Stomach (tissue), 19 donors: ENCODE measurements at regions of chr14 and their contacts with region 1.

Region 1: DNA sequence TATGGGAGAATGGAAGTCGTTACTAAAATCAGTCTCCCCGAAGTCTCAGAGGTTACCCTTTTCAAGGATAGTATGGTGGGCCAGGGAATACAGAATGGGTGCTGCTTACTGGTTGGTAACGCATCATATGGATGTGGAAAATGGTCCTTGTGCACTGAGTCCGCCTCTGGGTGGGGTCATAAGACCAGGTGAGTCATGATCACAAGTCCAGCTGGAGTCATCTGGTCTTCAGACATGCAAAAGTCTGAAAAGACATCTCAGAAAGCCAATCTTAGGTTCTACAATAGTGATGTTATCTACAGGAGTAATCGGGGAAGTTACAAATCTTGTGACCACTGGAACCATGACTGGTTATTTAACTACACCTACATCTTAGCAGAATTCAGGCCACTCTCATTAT is 71.9 kb upstream of the TCL1B start:
- DNase-seq: peak in 1 of 2 donors; percentile 3
- H3K4me3 ChIP-seq: no peak overlapping the region
- H3K27ac ChIP-seq: no peak overlapping the region
- H3K4me1 ChIP-seq: no peaks in the 10 kb centered on the region
- H3K27me3 ChIP-seq: peaks cover 0 to 32% (median 0%) of the 10 kb centered on the region in 3 donors
- CTCF ChIP-seq: no peak
- EP300 ChIP-seq: no peak
- POLR2A ChIP-seq: no peak

Region 2: GRCh38 chr14:95683793-95684192 is 69.4 kb after region 1 on chr14:
- intact Hi-C with region 1: loop called (anchors 10 kb)
- DNase-seq: peak in 1 of 2 donors; percentile 36
- H3K4me3 ChIP-seq: no peak overlapping the region
- H3K27ac ChIP-seq: no peak overlapping the region
- H3K4me1 ChIP-seq: no peaks in the 10 kb centered on the region
- H3K27me3 ChIP-seq: peaks cover 0 to 30% (median 0%) of the 10 kb centered on the region in 3 donors
- CTCF ChIP-seq: peak in 5 of 7 experiments; percentile 43 to 70 (median 56)
- EP300 ChIP-seq: no peak
- POLR2A ChIP-seq: no peak